PC-9 (cell line): ENCODE measurements at regions of chr1 and their contacts with region 1.

Region 1: GRCh38 chr1:110766025-110766647 is 91.4 kb upstream of the KCNA3 start:
- DNase-seq: no peak
- H3K4me3 ChIP-seq: no peak overlapping the region
- H3K27ac ChIP-seq: no peak overlapping the region
- H3K4me1 ChIP-seq: peaks cover 14% of the 10 kb centered on the region
- H3K27me3 ChIP-seq: peaks cover 15% of the 10 kb centered on the region
- CTCF ChIP-seq: peak; percentile 90

Region 2: DNA sequence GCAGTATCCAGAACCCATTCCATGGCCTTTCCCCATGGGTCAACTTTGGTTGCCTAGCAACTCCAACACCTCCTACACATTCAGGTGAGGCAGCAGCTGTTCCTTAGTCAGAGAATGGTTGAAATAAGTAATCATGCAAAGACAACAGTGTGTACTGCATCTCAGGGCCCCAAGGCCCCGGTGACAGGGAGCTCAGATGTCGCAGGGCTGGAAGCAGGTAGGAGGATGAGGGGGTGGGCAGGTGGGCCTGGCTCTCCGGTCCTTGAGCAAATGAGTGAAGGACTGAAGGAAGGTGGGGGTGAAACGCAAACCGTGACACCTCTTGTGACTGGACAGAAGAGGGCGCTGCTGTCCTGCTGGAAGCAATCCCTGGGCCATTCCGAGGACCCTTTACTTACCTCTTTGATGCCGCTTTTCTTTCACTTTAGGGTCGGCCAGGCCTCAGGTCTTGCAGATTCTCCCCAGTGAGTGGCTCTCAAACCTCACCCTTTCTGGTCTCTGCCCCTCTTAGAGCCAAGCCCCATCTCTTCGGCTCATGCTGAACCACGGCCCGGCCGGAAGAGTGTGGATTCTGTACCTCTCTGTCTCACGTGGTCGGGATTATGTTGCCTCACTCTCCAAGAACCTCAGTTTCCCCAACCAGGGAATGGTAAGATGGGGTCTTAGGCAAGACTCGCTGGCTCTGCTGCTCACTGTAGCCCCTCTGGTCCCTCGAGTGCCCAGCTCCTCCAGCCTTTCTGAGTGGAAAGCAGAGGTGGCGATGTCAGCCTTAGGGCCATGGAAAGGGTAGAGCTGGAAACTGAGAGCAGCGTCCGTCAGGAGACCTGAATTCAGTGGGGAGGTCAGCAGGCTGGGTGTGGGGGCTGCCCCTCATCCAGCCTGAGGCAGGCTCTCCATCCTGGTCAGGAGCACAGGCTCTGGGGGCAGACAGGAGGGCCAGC is 241.6 kb before region 1 on chr1:
- CTCF ChIA-PET with region 1: no interaction called
- POLR2A ChIA-PET with region 1: no interaction called
- intact Hi-C with region 1: loop called (anchors 5 kb)
- DNase-seq: peak in 1 of 2 experiments; percentile 27
- H3K4me3 ChIP-seq: no peak overlapping the region
- H3K27ac ChIP-seq: no peak overlapping the region
- H3K4me1 ChIP-seq: 0 out of 2 replicates have a peak, but pooled peaks cover 8% of the 10 kb centered on the region
- H3K27me3 ChIP-seq: peaks cover 96% of the 10 kb centered on the region
- CTCF ChIP-seq: peak; percentile 91

Region 3: GRCh38 chr1:110630839-110631663 is 135.1 kb before region 1 on chr1:
- CTCF ChIA-PET with region 1: no interaction called
- POLR2A ChIA-PET with region 1: no interaction called
- intact Hi-C with region 1: loop called (anchors 1 kb)
- DNase-seq: peak; percentile 58 to 63
- H3K4me3 ChIP-seq: no peak overlapping the region
- H3K27ac ChIP-seq: no peak overlapping the region
- H3K4me1 ChIP-seq: no peaks in the 10 kb centered on the region
- H3K27me3 ChIP-seq: no peaks in the 10 kb centered on the region
- CTCF ChIP-seq: peak; percentile 89

Region 4: DNA sequence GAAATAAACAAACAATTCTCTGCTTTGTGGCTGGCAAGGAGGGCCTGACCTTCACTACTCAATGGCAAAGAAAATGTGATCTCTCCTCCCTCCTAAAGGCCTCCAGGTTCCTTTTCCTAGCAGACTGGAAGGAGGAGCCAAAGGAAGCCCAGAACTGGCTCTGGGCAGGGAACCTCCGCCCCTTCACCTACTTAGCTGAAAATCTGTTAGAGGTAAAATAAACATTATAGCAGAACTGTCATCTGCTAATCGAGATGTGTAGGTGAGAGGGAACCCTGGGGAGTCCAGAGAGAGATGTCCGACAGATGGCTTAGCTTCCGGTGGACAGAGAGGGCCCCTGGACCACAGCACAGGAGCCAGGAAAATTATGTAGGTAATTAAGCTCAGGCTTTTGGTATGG is 16.2 kb before region 1 on chr1:
- CTCF ChIA-PET with region 1: no interaction called
- POLR2A ChIA-PET with region 1: no interaction called
- intact Hi-C with region 1: no loop called
- DNase-seq: no peak
- H3K4me3 ChIP-seq: no peak overlapping the region
- H3K27ac ChIP-seq: no peak overlapping the region
- H3K4me1 ChIP-seq: no peaks in the 10 kb centered on the region
- H3K27me3 ChIP-seq: peaks cover 47% of the 10 kb centered on the region
- CTCF ChIP-seq: no peak